Ovary (tissue), 10 donors: ENCODE measurements at regions of chr16 and their contacts with region 1.

Region 1: DNA sequence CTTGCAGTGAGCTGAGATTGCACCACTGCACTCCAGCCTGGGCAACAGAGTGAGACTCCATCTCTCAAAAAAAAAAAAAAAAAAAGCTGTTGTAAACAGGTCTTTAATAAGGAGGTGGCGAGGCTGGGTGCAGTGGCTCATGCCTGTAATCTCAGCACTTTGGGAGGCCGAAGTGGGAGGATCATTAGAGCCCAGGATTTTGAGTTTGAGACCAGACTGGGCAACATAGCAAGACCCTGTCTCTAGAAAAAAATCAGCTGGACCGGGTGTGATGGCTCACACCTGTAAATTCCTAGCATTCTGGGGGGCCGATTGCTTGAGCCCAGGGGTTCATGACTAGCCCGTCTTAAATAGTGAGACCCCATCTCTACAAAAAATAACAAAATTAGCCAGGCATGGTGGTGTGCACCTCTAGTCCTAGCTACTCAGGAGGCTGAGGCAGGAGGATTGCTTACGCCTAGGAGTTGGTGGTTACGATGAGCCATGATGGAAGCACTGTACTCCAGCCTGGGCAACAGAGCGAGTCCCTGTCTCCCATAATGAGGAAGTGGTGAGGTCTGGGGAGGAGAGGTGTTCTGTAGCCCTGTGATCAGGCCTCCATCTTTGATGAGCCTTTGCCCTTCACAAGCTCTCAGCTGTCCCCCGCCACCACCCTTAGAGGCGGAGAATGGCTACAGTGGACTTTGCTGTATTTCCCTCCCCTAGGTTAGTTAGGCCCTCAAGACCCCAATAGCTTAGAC is 36.2 kb downstream of the ZNF778 start:
- DNase-seq: no peak
- H3K4me3 ChIP-seq: no peak overlapping the region
- H3K27ac ChIP-seq: no peak overlapping the region
- H3K4me1 ChIP-seq: peaks cover 9% of the 10 kb centered on the region
- H3K27me3 ChIP-seq: no peaks in the 10 kb centered on the region
- CTCF ChIP-seq: no peak
- EP300 ChIP-seq: no peak
- POLR2A ChIP-seq: no peak

Region 2: GRCh38 chr16:89210904-89211515 is 42.7 kb before region 1 on chr16:
- intact Hi-C with region 1: no loop called
- DNase-seq: peak in 1 of 5 donors; percentile 19
- H3K4me3 ChIP-seq: no peak overlapping the region
- H3K27ac ChIP-seq: no peak overlapping the region
- H3K4me1 ChIP-seq: no peaks in the 10 kb centered on the region
- H3K27me3 ChIP-seq: no peaks in the 10 kb centered on the region
- CTCF ChIP-seq: no peak
- EP300 ChIP-seq: no peak
- POLR2A ChIP-seq: no peak

Region 3: DNA sequence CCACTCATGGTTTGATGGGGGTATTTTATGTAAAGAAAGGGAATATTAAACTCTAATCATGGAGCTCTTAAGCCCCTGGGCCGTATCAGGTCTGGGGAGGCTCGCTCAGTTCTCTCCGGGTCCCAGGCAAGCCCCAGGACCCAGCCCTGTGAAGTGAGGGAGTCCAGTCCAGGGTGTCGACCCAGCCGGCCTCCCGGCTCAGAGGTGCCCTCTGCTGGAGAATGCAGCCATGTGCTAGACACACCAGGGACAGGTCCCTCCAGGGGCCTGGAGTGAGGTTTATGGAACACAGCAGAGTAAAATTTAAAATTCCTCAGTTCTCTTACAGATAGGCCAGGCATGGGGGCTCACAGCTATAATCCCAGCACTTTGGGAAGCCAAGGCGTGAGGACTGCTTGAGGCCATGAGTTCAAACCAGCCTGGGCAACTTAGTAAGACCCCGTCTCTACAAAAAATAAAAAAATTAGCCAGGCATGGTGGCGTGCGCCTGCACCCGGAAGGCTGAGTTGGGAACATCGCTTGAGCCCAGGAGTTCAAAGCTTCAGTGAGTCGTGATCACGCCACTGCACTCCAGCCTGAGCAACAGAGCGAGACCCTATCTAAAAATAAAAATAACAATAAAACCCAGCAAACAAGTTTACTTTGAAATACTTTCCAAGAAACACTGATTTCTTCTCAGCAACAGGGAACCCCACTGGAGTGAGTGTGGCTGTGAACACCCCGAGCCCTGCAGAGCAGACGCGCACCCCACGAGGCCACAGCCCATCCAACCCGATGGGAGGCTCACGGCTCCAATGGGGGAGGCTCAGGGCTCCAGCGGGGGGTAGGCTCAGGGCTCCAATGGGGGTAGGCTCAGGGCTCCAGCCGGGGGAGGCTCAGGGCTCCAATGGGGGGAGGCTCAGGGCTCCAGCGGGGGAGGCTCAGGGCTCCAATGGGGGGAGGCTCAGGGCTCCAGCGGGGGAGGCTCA is 36.0 kb after region 1 on chr16:
- intact Hi-C with region 1: loop called in 1 of 4 experiments (anchors 5 kb)
- DNase-seq: peak; percentile 71 to 81 (median 77)
- H3K4me3 ChIP-seq: no peak overlapping the region
- H3K27ac ChIP-seq: peak overlapping the region in 1 of 2 donors; percentile 24
- H3K4me1 ChIP-seq: peaks cover 13% of the 10 kb centered on the region
- H3K27me3 ChIP-seq: no peaks in the 10 kb centered on the region
- CTCF ChIP-seq: peak; percentile 40 to 50 (median 47)
- EP300 ChIP-seq: no peak
- POLR2A ChIP-seq: no peak